ENCODE measurements at regions of chr6 and their contacts with region 1.

Region 1: DNA sequence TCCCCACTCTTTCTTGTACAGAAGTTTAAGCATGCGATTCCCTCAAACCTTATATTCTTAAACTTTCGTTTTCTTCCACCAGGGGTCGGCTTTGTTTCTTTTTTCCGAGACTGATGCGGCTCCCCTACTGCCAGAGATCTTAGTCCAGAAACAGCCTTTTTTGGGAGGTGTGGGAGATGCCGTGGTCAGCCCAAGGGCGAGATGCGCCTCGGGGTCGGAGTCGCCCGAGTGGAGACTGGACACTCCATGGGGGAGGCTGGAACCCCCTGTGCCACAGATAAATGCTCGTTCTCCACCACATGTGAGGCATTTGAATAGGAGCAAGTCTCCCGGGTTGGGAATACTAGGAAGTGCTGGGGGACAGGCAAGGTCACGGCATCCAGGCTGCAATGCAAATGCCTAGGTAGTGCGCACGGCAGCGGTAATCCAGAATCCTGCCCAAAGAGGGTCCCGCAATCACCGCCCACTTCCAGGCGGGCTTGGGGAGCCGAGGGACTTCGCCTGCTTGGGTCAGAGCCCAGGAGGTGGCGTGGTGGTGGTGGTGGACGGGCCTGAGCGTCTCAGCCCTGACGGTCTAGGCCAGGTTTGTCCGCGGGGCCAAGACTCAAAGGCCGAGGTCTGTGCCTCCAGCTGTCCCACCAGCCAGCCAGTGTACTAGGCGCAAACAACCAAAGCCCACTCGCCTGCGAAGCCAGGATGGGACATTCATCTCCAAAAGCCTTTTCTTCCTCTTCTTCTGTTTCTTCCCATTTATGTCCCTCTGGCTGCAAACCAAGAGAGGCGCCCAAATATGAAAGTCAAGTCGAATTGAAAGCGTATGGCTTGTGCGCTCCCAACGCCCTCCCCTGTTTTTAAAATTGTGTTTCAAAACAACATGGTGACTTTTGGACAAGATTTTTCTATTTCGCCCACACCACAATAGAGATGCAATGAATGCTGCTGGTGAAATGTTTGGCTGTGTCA is 39.3 kb upstream of the OSTM1 start:
- DNase-seq: no peak
- ATAC-seq: peak; percentile 50

Region 2: DNA sequence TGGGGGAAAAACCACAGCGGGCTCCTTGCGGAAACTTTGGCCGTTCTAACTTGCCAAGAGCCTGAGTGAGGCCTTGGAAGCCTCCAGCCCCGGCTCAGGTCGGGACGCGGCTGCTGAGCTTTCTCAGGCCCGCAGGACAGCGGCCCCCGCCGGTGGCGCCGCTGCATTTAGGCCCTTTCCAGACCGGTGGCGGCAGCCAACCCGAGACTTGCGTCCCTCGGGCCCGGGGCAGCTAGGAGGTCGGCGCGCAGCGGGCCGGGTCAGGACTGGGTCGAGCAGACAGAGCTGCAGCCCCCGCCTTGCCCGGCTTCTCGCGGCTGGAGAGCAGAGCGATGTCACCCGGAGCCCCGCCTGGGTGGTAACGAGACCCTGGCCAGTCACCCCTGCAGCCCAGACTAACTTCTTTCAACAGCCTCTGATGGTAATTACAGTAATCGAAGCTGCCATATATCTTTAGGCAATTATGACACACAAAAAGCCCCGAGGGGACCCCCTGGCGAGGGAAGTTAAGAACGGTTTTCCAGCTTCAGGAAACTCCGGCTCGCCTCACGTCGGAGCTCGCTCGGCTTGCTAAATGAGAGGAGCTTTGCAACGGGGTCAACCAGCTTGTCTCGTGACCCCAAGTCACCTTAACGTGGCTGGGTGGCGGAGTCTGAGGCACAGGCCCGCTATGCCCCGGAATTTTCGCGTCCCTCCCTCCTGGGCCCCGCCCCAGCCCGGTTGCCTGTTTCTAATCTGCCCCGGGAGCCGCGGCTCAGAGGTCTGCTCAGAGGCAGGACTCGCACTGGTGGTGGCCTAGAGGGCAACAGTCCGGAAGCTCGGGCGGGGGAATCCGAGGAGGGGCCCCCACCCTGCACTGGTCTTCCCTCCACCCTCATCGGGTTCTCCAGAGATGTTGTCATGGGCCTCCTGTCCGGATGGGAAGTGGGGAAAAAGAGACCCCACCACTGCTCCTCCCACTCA is 54.9 kb after region 1 on chr6:
- intact Hi-C with region 1: no loop called
- DNase-seq: peak; percentile 59
- ATAC-seq: peak; percentile 77

Region 3: DNA sequence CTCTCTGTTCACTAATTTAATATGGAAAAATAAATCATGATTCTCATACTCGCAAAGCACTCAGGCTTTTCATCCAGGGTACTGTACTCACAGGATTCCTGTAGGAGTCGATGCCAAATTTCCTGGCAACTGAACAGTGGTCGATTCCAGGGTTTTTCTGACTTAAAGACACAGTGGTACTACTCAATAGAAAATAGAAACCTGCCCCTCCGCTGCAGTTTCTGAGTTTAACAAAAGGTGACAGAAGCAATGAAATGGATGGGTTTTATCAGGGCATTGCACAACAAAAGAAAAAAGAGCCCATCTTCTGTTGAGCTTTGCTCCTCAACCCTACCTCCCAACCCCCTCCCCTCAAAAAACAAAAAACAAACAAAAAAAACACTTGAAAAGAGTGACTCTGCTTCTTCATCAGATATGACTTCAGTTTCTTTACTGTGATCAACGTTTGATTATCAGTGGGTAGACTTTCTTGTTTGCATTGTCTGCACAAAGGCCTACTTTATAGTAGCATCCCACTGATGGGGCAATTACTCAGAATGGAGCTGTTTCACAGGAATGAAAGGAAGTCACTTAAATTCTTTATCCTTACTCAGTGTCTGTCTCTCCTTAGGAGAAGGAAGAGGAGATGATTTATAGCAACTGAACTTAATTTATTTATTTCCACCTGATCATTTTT is 350.7 kb after region 1 on chr6:
- intact Hi-C with region 1: no loop called
- DNase-seq: no peak
- ATAC-seq: no peak

Region 4: DNA sequence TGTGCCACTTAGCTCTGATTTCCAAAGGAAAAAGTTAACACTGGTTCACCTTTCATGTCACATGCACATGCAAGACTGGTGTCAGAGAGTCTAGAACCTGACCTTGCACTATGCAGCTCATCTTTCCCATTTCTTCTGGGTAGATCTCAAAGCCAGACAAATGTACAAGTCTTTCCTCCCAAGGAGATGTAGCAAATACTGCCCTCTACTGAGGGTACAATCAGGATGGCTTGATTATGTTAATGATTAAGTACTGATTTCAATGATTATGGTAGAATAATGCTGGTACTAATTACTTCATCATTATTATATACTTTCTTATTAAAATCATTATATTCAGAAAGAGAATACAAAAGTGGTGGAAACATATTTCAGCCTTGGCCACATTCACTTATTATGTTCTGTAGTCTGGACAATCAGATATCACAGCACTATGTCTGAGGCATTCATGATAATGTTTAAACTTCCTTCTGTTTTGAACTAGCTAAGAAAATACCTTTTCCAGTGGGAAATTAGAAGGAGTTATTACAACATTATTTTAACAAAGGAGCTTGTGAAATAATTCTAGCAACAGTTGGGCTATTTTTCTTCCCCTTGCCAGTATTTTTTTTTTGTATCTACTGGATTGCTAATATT is 378.4 kb after region 1 on chr6:
- intact Hi-C with region 1: loop called (anchors 10 kb)
- DNase-seq: no peak
- ATAC-seq: no peak

Region 5: GRCh38 chr6:108526739-108527174 is 412.9 kb after region 1 on chr6:
- intact Hi-C with region 1: loop called (anchors 10 kb)
- DNase-seq: no peak
- ATAC-seq: peak; percentile 66